PC-9 (cell line): ENCODE measurements at regions of chr6 and their contacts with region 1.

Region 1: DNA sequence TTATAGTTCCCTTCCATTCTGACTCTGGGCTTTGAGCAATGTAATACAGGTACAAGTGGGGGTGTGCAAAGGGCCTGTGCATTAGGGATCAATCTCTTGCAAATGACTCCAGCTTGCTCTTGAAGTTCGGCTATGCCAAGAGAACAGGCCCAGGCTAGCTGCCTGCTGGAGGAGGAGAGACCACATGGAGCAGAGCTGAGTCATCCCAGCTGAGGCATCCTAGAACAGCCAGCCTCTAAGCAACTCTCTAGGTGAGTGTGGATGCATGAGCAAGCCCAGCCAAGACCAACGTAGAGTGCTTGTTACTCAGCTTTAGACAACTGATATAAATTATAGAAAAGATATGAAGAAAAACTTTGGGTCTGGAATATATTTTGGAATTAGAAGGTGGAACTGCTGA is 47.6 kb upstream of the RBM24 start:
- DNase-seq: peak in 1 of 2 experiments; percentile 4
- H3K4me3 ChIP-seq: no peak overlapping the region
- H3K27ac ChIP-seq: no peak overlapping the region
- H3K4me1 ChIP-seq: no peaks in the 10 kb centered on the region
- H3K27me3 ChIP-seq: no peaks in the 10 kb centered on the region
- CTCF ChIP-seq: no peak

Region 2: GRCh38 chr6:17086469-17086868 is 147.1 kb before region 1 on chr6:
- CTCF ChIA-PET with region 1: no interaction called
- POLR2A ChIA-PET with region 1: no interaction called
- intact Hi-C with region 1: no loop called
- DNase-seq: peak; percentile 55 to 64
- H3K4me3 ChIP-seq: no peak overlapping the region
- H3K27ac ChIP-seq: no peak overlapping the region
- H3K4me1 ChIP-seq: no peaks in the 10 kb centered on the region
- H3K27me3 ChIP-seq: no peaks in the 10 kb centered on the region
- CTCF ChIP-seq: peak; percentile 83

Region 3: GRCh38 chr6:17167327-17167979 is 66.1 kb before region 1 on chr6:
- CTCF ChIA-PET with region 1: no interaction called
- POLR2A ChIA-PET with region 1: interaction called, 11 read pairs
- intact Hi-C with region 1: no loop called
- DNase-seq: peak in 1 of 2 experiments; percentile 42
- H3K4me3 ChIP-seq: no peak overlapping the region
- H3K27ac ChIP-seq: no peak overlapping the region
- H3K4me1 ChIP-seq: no peaks in the 10 kb centered on the region
- H3K27me3 ChIP-seq: no peaks in the 10 kb centered on the region
- CTCF ChIP-seq: peak; percentile 58